ENCODE measurements at regions of chr15 and their contacts with region 1.

Region 1: GRCh38 chr15:60444289-60444912 is 34.5 kb downstream of the ICE2 start:
- H3K4me3 Mint-ChIP-seq: no peak overlapping the region
- H3K27ac Mint-ChIP-seq: no peak overlapping the region
- H3K4me1 Mint-ChIP-seq: peaks cover 10% of the 10 kb centered on the region
- H3K27me3 Mint-ChIP-seq: no peaks in the 10 kb centered on the region

Region 2: DNA sequence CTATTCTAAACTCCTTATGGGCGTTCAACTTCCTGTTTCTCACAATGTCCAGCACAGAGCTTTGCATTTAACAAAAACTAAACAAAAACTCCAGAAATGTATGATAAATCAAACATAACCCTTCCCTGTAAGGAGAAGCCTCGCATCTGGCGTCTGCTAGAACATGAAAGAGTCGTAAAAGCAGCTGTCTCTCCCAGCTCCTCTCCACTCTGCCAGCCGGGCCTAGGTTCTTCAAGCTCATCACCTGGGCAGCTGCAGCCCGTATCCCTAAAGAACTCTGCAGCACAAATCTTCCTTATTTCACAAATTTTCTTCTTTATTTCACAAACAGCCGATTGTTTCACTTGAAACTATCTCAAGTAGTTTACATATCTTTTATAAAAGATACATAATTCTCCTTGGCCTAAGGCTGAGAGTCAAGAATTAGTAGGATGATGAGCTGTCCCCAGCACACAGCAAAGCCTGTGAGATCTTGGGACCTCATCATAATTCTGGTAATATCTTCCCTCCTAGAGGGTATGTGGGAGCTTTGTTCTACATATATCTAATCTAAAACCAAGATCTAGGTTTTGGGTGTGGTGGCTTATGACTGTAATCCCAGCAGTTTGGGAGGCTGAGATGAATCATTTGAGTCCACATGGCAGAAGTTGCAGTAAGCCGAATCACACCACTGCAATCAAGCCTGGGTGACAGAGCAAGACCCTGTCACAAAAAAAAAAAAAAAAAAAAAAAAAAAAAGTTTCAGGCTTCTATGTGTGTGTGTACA is 81.9 kb before region 1 on chr15:
- intact Hi-C with region 1: loop called (anchors 5 kb)
- H3K4me3 Mint-ChIP-seq: no peak overlapping the region
- H3K27ac Mint-ChIP-seq: peak overlapping the region; percentile 63
- H3K4me1 Mint-ChIP-seq: peaks cover 41% of the 10 kb centered on the region
- H3K27me3 Mint-ChIP-seq: no peaks in the 10 kb centered on the region

Region 3: DNA sequence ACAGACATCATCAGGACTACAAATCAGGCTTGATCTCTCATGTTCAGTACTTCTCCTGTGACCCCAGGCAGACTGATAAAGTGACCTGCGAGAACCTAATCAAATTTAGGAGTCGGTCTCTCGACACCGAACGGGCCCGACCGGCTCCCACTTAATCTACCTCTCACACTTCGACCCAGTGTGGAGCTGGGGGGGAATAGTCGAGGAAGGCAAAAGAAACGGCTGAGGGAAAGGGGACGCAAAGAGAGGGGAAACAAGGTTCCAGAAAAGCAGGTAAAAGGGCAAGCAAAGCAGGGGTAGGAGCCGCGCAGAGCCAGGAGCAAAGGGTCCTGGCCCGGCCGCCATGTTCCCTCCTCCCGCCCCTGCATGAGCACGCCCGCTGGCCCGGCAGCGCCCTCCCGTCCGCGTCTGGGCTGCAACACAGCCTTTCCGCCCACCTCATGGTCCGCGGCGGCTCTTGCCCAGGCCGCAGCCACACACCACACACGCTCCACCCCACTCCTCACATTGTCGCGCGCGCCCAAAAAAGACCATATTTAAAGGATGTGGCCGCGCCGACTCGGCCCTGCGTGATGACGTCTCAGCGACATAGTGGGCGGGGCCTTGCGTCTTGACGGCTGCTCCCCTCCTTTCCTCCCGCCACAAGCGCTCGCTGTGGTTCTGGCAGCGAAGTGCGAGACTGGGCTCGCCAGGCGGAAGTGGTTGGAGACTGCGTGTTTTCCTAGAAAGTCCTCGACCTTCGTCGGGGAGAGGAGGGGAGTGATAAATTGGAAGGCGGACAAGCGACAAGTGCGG is 34.4 kb after region 1 on chr15 and contains the start of gene ICE2:
- intact Hi-C with region 1: no loop called
- H3K4me3 Mint-ChIP-seq: peak within 1 kb of the TSS; percentile 99
- H3K27ac Mint-ChIP-seq: peak within 1 kb of the TSS; percentile 99
- H3K4me1 Mint-ChIP-seq: peaks cover 29% of the 10 kb centered on the region
- H3K27me3 Mint-ChIP-seq: no peaks in the 10 kb centered on the region

Region 4: DNA sequence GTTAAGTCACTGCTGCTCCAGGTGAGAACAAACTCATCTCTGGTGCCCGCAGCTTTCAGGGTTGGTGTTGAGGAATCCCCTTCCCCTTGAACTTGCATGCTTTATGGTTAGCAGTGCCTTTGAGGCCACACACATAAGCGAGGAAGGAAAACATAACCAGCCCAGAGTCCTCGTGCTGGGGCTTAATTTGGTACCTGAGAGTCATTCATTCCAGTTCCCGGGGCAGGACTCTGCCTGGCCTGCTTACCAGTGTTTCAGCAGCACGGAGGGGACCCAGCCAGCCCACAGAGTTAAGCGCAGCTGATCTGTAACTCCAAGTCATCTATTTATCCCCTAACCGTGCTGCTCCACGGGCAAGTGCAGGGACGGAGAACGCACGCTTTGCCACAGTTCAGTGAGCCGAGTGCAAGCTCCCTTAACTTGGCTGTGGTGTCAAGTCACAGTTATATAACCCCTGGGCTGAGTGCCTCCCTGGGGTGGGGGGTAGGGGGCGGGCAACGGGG is 336.9 kb after region 1 on chr15:
- intact Hi-C with region 1: no loop called
- H3K4me3 Mint-ChIP-seq: no peak overlapping the region
- H3K27ac Mint-ChIP-seq: no peak overlapping the region
- H3K4me1 Mint-ChIP-seq: no peaks in the 10 kb centered on the region
- H3K27me3 Mint-ChIP-seq: peaks cover 3% of the 10 kb centered on the region